Activated B cell treated with CpG ODN at 0.5 μM for 24 hours (primary cell): ENCODE measurements at regions of chr12 and their contacts with region 1.

Region 1: GRCh38 chr12:108562348-108563135 is at the start of gene ISCU:
- DNase-seq: peak; percentile 100
- ATAC-seq: peak; percentile 71
- H3K4me3 Mint-ChIP-seq: peak within 1 kb of the TSS; percentile 100
- H3K27ac Mint-ChIP-seq: peak within 1 kb of the TSS; percentile 99
- H3K4me1 Mint-ChIP-seq: peaks cover 73% of the 10 kb centered on the region
- H3K27me3 Mint-ChIP-seq: no peaks in the 10 kb centered on the region
- CTCF ChIP-seq: no peak
- total RNA-seq, gene ISCU: 114 and 117 TPM in 2 replicates

Region 2: GRCh38 chr12:108505129-108505528 is 57.4 kb before region 1 on chr12:
- CTCF ChIA-PET with region 1: no interaction called
- POLR2A ChIA-PET with region 1: no interaction called
- intact Hi-C with region 1: no loop called
- DNase-seq: no peak
- ATAC-seq: no peak
- H3K4me3 Mint-ChIP-seq: no peak overlapping the region
- H3K27ac Mint-ChIP-seq: no peak overlapping the region
- H3K4me1 Mint-ChIP-seq: peaks cover 5% of the 10 kb centered on the region
- H3K27me3 Mint-ChIP-seq: peaks cover 8% of the 10 kb centered on the region
- CTCF ChIP-seq: no peak

Region 3: DNA sequence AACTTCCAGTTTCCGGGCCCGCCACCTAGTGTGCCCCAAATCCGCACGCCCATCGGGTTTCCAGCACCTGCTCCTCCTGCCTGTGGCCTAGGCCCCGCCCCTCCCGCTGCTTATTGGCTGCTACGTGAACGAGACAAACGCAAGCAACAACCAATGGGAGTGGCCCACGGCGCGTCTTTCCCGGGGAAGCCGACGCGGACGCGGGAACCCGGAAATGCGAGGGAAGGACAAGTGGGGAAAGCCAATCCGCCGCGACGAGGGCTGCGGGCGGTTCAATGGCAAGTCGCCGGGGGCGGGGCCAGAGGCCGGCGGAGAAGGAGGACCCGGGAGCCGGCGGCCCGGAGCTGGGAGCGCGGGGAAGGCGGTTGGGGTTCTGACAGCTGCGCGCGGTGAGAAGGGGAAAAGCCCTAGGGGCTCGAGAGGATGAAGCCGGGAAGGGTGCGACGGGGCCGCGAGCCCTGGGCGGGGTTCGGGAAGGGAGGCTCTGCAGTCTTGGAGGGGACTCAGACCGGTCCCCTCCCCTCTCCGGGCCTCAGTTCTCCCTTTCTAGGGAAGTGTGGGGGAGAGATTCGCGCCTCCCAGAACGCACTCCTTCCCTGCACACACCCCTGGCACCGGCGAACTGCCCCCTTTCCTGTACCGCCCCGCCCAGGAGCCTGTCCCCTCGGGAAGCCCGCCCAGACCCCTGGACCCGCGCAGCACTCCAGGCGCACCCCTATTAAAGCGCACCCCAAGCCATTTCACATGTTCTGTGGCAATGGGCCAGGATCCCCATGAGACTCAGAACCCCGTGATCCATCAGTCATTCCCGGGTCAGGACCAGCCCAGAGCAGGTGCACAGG is 47.3 kb before region 1 on chr12 and contains the start of gene FICD:
- CTCF ChIA-PET with region 1: no interaction called
- POLR2A ChIA-PET with region 1: interaction called, 8 read pairs
- intact Hi-C with region 1: loop called (anchors 1 kb)
- DNase-seq: peak; percentile 92
- ATAC-seq: peak; percentile 92
- H3K4me3 Mint-ChIP-seq: peak within 1 kb of the TSS; percentile 95
- H3K27ac Mint-ChIP-seq: peak within 1 kb of the TSS; percentile 84
- H3K4me1 Mint-ChIP-seq: peaks cover 36% of the 10 kb centered on the region
- H3K27me3 Mint-ChIP-seq: no peaks in the 10 kb centered on the region
- CTCF ChIP-seq: no peak
- total RNA-seq, gene FICD: 7.7 and 11.2 TPM in 2 replicates

Region 4: GRCh38 chr12:108618079-108618952 is 55.8 kb after region 1 on chr12:
- CTCF ChIA-PET with region 1: interaction called, 338 read pairs
- POLR2A ChIA-PET with region 1: interaction called, 158 read pairs
- intact Hi-C with region 1: loop called (anchors 1 kb)
- DNase-seq: peak; percentile 76
- ATAC-seq: peak; percentile 40
- H3K4me3 Mint-ChIP-seq: peak overlapping the region; percentile 19
- H3K27ac Mint-ChIP-seq: peak overlapping the region; percentile 53
- H3K4me1 Mint-ChIP-seq: peaks cover 70% of the 10 kb centered on the region
- H3K27me3 Mint-ChIP-seq: no peaks in the 10 kb centered on the region
- CTCF ChIP-seq: peak; percentile 60

Region 5: GRCh38 chr12:108731105-108731865 is 168.7 kb after region 1 on chr12 and contains the start of gene CORO1C:
- CTCF ChIA-PET with region 1: no interaction called
- POLR2A ChIA-PET with region 1: interaction called, 10 read pairs
- intact Hi-C with region 1: loop called (anchors 1 kb)
- DNase-seq: peak; percentile 98
- ATAC-seq: peak; percentile 73
- H3K4me3 Mint-ChIP-seq: peak within 1 kb of the TSS; percentile 97
- H3K27ac Mint-ChIP-seq: peak within 1 kb of the TSS; percentile 96
- H3K4me1 Mint-ChIP-seq: peaks cover 48% of the 10 kb centered on the region
- H3K27me3 Mint-ChIP-seq: no peaks in the 10 kb centered on the region
- CTCF ChIP-seq: no peak
- total RNA-seq, gene CORO1C: 68.3 and 69.4 TPM in 2 replicates

Region 6: DNA sequence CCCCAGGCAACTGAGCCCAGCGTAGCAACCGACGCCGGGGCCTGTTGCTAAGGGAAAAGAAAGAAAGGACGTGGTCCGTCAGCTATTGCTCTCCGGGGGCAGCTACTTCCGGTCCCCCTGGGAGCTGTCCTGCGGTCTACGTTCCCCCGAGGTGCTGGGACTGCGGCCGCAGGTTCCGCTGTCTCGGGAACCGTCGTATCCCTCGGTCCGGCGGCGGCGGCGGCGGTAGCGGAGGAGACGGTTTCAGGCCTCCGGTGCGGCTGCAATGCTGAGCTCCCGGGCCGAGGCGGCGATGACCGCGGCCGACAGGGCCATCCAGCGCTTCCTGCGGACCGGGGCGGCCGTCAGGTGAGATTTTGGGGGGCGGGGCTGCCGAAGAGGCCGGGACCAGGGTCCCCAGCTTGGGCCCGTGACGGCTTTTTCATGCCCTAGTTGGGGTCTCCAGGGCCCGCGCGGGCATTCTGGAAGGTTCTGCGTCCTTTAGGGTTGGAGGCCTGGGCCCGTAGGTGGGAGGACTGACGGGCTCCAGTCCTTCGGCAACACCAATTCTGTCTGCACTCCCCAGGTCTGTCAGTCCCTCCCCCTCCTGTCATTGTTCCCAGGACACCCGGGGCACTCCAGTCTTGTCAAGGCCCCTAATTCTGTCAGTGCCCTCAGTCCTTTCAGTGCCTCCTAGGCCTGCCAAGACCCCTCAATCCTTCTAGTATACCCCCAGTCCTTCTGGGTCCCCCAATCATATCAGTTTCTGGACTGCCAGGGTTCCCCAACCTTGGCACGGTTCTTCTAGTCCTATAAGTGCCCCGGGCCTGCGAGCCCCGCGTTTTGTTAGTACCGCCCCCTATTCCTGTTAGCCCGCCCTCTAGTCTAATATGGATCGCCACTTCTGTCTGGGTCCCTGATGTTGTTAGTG is 490.1 kb after region 1 on chr12 and contains the start of gene USP30:
- CTCF ChIA-PET with region 1: no interaction called
- POLR2A ChIA-PET with region 1: no interaction called
- intact Hi-C with region 1: loop called (anchors 2 kb)
- DNase-seq: peak; percentile 80
- ATAC-seq: peak; percentile 85
- H3K4me3 Mint-ChIP-seq: peak within 1 kb of the TSS; percentile 85
- H3K27ac Mint-ChIP-seq: peak within 1 kb of the TSS; percentile 86
- H3K4me1 Mint-ChIP-seq: peaks cover 22% of the 10 kb centered on the region
- H3K27me3 Mint-ChIP-seq: no peaks in the 10 kb centered on the region
- CTCF ChIP-seq: no peak
- total RNA-seq, gene USP30: 17.4 and 17.7 TPM in 2 replicates

Region 7: GRCh38 chr12:109713187-109713984 is 1150.8 kb after region 1 on chr12 and contains the start of gene FAM222A:
- CTCF ChIA-PET with region 1: no interaction called
- POLR2A ChIA-PET with region 1: no interaction called
- intact Hi-C with region 1: loop called (anchors 5 kb)
- DNase-seq: peak; percentile 96
- ATAC-seq: peak; percentile 85
- H3K4me3 Mint-ChIP-seq: peak within 1 kb of the TSS; percentile 80
- H3K27ac Mint-ChIP-seq: no peak within 1 kb of the TSS
- H3K4me1 Mint-ChIP-seq: peaks cover 12% of the 10 kb centered on the region
- H3K27me3 Mint-ChIP-seq: peaks cover 23% of the 10 kb centered on the region
- CTCF ChIP-seq: no peak
- total RNA-seq, gene FAM222A: 0.73 and 1.6 TPM in 2 replicates